ENCODE measurements at regions of chr3 and their contacts with region 1.

Region 1: GRCh38 chr3:116378077-116378476 is 67.2 kb downstream of the LSAMP start:
- DNase-seq: no peak
- ATAC-seq: no peak
- H3K4me3 ChIP-seq: no peak overlapping the region
- H3K27ac ChIP-seq: no peak overlapping the region
- H3K4me1 ChIP-seq: no peaks in the 10 kb centered on the region
- H3K27me3 ChIP-seq: no peaks in the 10 kb centered on the region
- CTCF ChIP-seq: no peak
- POLR2A ChIP-seq: no peak
- RAD21 ChIP-seq: no peak

Region 2: GRCh38 chr3:116432795-116433194 is 54.7 kb after region 1 on chr3:
- CTCF ChIA-PET with region 1: no interaction called
- POLR2A ChIA-PET with region 1: no interaction called
- dilution Hi-C with region 1: no loop called
- in situ Hi-C with region 1: no loop called
- intact Hi-C with region 1: loop called (anchors 10 kb)
- DNase-seq: peak; percentile 28
- ATAC-seq: no peak
- H3K4me3 ChIP-seq: no peak overlapping the region
- H3K27ac ChIP-seq: no peak overlapping the region
- H3K4me1 ChIP-seq: no peaks in the 10 kb centered on the region
- H3K27me3 ChIP-seq: no peaks in the 10 kb centered on the region
- CTCF ChIP-seq: no peak
- POLR2A ChIP-seq: no peak
- RAD21 ChIP-seq: no peak

Region 3: DNA sequence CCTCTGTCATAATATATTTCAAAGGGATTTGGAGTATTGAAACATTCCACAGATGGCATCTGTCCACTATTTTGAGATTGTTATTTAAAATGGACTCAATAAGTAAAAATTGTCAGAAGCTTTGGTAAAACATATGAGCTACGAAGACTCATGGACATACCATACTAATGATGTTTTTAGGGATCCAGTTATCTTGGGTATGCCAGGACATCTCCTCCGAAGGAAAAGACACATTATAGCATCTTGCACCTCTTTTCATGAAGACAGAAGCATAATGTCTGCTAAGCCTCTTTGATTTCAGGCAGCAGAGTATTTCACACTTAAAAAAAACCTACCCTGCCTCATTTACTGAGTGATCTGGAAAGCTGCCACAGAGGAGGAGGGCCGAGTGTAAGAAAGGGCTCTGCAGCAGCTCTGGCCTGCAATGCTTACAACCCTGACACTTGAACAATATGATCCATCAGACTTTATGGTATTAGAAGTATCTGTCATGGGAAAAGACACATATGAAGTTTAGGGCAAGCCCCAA is 616.3 kb after region 1 on chr3:
- CTCF ChIA-PET with region 1: no interaction called
- POLR2A ChIA-PET with region 1: no interaction called
- dilution Hi-C with region 1: no loop called
- in situ Hi-C with region 1: no loop called
- intact Hi-C with region 1: no loop called
- DNase-seq: no peak
- ATAC-seq: no peak
- H3K4me3 ChIP-seq: no peak overlapping the region
- H3K27ac ChIP-seq: no peak overlapping the region
- H3K4me1 ChIP-seq: no peaks in the 10 kb centered on the region
- H3K27me3 ChIP-seq: no peaks in the 10 kb centered on the region
- CTCF ChIP-seq: no peak
- POLR2A ChIP-seq: no peak
- RAD21 ChIP-seq: no peak